Heart left ventricle (tissue), 16 donors: ENCODE measurements at regions of chr6 and their contacts with region 1.

Region 1: DNA sequence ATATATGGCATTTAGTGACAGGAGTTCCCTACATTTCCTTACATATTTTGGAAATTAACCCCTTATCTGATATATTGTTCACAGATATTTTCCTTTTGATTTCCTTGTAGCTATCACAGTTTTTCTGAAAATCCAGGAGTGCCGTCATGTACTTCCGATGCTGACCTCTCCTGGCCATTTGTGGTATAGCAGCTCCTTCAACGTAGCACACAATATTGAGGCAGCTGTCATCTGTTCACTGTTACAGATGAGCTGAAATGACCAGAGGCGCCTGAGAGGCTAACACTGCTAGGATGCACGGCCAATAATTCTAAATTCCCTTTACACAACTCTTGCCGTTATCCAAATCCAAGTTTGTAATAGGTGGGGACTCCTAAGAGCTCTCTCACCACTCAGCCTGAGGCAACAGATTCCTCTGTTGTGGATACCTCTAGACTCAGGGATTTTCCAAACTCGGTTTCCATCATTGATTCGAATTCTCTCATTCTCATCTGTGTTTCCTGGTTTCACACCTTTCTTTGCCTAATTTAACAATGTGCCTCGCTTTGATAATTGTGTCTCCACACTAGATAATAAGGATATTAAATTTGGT is 53.0 kb downstream of the MMUT start:
- DNase-seq: peak in 4 of 5 donors; percentile 26 to 54 (median 45)
- ATAC-seq: peak in 3 of 4 donors; percentile 54 to 74 (median 65)
- H3K4me3 ChIP-seq: no peak overlapping the region
- H3K27ac ChIP-seq: no peak overlapping the region
- H3K4me1 ChIP-seq: no peaks in the 10 kb centered on the region
- H3K27me3 ChIP-seq: no peaks in the 10 kb centered on the region
- CTCF ChIP-seq: peak; percentile 76 to 91 (median 82)
- POLR2A ChIP-seq: no peak

Region 2: GRCh38 chr6:49198015-49198414 is 212.0 kb before region 1 on chr6:
- intact Hi-C with region 1: loop called in 1 of 10 experiments (anchors 10 kb)
- DNase-seq: no peak
- ATAC-seq: no peak
- H3K4me3 ChIP-seq: no peak overlapping the region
- H3K27ac ChIP-seq: no peak overlapping the region
- H3K4me1 ChIP-seq: no peaks in the 10 kb centered on the region
- H3K27me3 ChIP-seq: no peaks in the 10 kb centered on the region
- CTCF ChIP-seq: no peak
- POLR2A ChIP-seq: no peak

Region 3: DNA sequence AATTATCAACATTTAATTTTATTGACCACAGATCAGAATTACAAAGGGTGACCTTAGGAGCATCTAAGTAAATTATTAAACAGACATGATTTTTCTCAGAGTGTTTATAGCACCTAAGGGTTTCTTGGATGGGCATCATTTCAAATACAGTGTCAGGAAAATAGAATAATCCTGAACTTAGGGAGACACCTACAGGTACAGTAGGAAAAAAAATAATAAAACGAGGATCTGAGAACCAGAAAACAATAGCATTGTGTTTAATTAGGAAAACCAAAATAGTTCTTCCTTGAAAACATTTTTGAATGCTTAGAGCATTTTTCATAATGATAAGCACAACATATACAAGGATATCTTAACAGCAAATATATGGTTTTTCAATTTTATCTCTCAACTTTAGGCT is 13.8 kb after region 1 on chr6:
- intact Hi-C with region 1: no loop called
- DNase-seq: no peak
- ATAC-seq: no peak
- H3K4me3 ChIP-seq: no peak overlapping the region
- H3K27ac ChIP-seq: no peak overlapping the region
- H3K4me1 ChIP-seq: no peaks in the 10 kb centered on the region
- H3K27me3 ChIP-seq: no peaks in the 10 kb centered on the region
- CTCF ChIP-seq: no peak
- POLR2A ChIP-seq: no peak

Region 4: GRCh38 chr6:49490632-49491031 is 80.6 kb after region 1 on chr6:
- intact Hi-C with region 1: no loop called
- DNase-seq: no peak
- ATAC-seq: no peak
- H3K4me3 ChIP-seq: no peak overlapping the region
- H3K27ac ChIP-seq: no peak overlapping the region
- H3K4me1 ChIP-seq: no peaks in the 10 kb centered on the region
- H3K27me3 ChIP-seq: no peaks in the 10 kb centered on the region
- CTCF ChIP-seq: no peak
- POLR2A ChIP-seq: no peak